T-cell (primary cell): ENCODE measurements at regions of chr1 and their contacts with region 1.

Region 1: GRCh38 chr1:160351629-160352028 is 8.4 kb downstream of the NCSTN start:
- DNase-seq: no peak
- ATAC-seq: no peak
- H3K4me3 ChIP-seq: no peak overlapping the region
- H3K4me3 Mint-ChIP-seq: no peak overlapping the region
- H3K27ac ChIP-seq: no peak overlapping the region
- H3K27ac Mint-ChIP-seq: no peak overlapping the region
- H3K4me1 ChIP-seq: no peaks in the 10 kb centered on the region
- H3K4me1 Mint-ChIP-seq: peaks cover 0 to 12% (median 9%) of the 10 kb centered on the region in 3 donors
- H3K27me3 ChIP-seq: no peaks in the 10 kb centered on the region
- H3K27me3 Mint-ChIP-seq: no peaks in the 10 kb centered on the region

Region 2: DNA sequence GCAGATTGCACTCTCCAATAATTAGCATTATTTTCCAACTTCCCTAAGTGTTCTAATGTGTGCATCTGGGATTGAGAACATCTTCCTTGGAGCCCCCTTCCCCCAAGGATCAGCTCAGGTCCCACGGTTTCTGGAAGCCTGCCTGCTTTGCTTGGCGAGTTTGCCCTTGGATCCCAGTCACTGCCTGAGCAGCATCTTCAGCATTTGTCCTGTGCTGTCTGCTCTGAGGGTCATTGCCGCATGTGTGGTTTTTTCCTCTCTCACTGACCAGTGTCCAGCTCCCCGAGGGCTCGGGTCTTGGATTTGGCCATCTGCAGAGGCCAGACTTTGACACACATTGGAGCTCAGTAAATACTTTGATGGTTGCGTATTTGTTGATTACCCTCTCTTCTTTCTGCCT is 66.9 kb after region 1 on chr1:
- CTCF ChIA-PET with region 1: interaction called in 1 of 2 experiments, 14 read pairs
- POLR2A ChIA-PET with region 1: no interaction called
- DNase-seq: peak in 1 of 35 experiments; percentile 7
- ATAC-seq: no peak
- H3K4me3 ChIP-seq: no peak overlapping the region
- H3K4me3 Mint-ChIP-seq: no peak overlapping the region
- H3K27ac ChIP-seq: no peak overlapping the region
- H3K27ac Mint-ChIP-seq: no peak overlapping the region
- H3K4me1 ChIP-seq: no peaks in the 10 kb centered on the region
- H3K4me1 Mint-ChIP-seq: no peaks in the 10 kb centered on the region
- H3K27me3 ChIP-seq: peaks cover 0 to 26% of the 10 kb centered on the region in 2 experiments
- H3K27me3 Mint-ChIP-seq: peaks cover 3 to 10% of the 10 kb centered on the region in 2 donors